ENCODE measurements at regions of chr7 and their contacts with region 1.

Region 1: DNA sequence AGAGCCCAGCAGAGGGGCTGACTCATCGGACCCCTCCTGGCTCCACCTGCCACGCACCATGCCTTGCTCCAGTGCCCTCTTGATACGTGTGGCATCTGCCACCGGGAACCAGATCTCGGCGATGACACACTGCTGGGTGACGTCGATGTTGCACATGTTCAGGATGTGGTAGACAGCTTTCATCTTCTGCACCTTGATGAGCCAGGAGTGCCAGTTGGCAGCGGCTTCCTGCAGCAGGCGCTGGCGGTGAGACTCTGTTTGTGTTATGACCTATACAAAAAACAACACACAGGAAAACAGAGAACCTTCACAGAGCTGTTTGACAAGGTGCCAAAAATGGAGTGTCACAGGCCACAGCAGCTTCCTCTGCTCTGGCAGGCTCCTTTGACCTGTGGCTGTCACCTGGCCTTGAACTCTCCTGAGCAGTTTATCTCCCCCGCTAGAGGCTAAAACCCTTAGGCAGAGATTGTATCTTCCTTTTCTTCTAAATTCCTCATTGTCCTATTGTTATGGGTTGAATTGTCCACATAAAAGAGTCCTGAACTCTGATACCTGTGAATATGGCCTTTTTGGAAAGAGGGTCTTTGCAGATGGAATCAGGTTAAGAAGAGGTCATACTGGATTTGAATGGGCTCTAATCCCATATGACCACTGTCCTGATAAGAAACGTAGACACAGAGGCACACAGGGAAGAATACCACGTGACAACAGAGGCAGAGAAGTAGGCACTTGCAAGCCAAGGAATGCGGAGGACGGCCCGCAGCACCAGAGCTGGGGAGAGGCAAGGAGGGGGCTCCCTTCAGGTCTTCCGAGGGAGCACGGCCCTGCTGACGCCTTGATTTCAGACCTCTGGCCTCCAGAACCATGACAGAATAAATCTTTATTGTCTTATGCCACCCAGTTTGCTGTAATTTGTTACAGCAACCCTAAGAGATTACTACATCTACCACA is 45.0 kb upstream of the TMEM213 start:
- DNase-seq: peak; percentile 76 to 99 (median 95)
- ATAC-seq: peak; percentile 92 to 96 (median 92)
- H3K4me3 ChIP-seq: peak overlapping the region in 1 of 2 donors; percentile 15
- H3K4me3 Mint-ChIP-seq: peak overlapping the region; percentile 22 to 67 (median 57)
- H3K27ac ChIP-seq: peak overlapping the region; percentile 90
- H3K27ac Mint-ChIP-seq: peak overlapping the region; percentile 85 to 93
- H3K4me1 ChIP-seq: peaks cover 15 to 36% of the 10 kb centered on the region in 2 experiments
- H3K4me1 Mint-ChIP-seq: peaks cover 52 to 80% (median 77%) of the 10 kb centered on the region in 3 donors
- H3K27me3 ChIP-seq: peaks cover 0 to 3% of the 10 kb centered on the region in 2 experiments
- H3K27me3 Mint-ChIP-seq: no peaks in the 10 kb centered on the region

Region 2: GRCh38 chr7:138618933-138619332 is 133.9 kb before region 1 on chr7:
- CTCF ChIA-PET with region 1: no interaction called
- POLR2A ChIA-PET with region 1: no interaction called
- DNase-seq: no peak
- ATAC-seq: no peak
- H3K4me3 ChIP-seq: no peak overlapping the region
- H3K4me3 Mint-ChIP-seq: no peak overlapping the region
- H3K27ac ChIP-seq: no peak overlapping the region
- H3K27ac Mint-ChIP-seq: no peak overlapping the region
- H3K4me1 ChIP-seq: peaks cover 0 to under 1% of the 10 kb centered on the region in 2 experiments
- H3K4me1 Mint-ChIP-seq: peaks cover 0 to 9% (median 2%) of the 10 kb centered on the region in 3 donors
- H3K27me3 ChIP-seq: no peaks in the 10 kb centered on the region
- H3K27me3 Mint-ChIP-seq: no peaks in the 10 kb centered on the region

Region 3: GRCh38 chr7:138684360-138684759 is 68.5 kb before region 1 on chr7:
- CTCF ChIA-PET with region 1: no interaction called
- POLR2A ChIA-PET with region 1: no interaction called
- DNase-seq: no peak
- ATAC-seq: no peak
- H3K4me3 ChIP-seq: no peak overlapping the region
- H3K4me3 Mint-ChIP-seq: no peak overlapping the region
- H3K27ac ChIP-seq: no peak overlapping the region
- H3K27ac Mint-ChIP-seq: no peak overlapping the region
- H3K4me1 ChIP-seq: no peaks in the 10 kb centered on the region
- H3K4me1 Mint-ChIP-seq: peaks cover 0 to 7% (median 0%) of the 10 kb centered on the region in 3 donors
- H3K27me3 ChIP-seq: peaks cover 0 to 13% of the 10 kb centered on the region in 2 experiments
- H3K27me3 Mint-ChIP-seq: peaks cover 5 to 6% of the 10 kb centered on the region in 2 donors

Region 4: DNA sequence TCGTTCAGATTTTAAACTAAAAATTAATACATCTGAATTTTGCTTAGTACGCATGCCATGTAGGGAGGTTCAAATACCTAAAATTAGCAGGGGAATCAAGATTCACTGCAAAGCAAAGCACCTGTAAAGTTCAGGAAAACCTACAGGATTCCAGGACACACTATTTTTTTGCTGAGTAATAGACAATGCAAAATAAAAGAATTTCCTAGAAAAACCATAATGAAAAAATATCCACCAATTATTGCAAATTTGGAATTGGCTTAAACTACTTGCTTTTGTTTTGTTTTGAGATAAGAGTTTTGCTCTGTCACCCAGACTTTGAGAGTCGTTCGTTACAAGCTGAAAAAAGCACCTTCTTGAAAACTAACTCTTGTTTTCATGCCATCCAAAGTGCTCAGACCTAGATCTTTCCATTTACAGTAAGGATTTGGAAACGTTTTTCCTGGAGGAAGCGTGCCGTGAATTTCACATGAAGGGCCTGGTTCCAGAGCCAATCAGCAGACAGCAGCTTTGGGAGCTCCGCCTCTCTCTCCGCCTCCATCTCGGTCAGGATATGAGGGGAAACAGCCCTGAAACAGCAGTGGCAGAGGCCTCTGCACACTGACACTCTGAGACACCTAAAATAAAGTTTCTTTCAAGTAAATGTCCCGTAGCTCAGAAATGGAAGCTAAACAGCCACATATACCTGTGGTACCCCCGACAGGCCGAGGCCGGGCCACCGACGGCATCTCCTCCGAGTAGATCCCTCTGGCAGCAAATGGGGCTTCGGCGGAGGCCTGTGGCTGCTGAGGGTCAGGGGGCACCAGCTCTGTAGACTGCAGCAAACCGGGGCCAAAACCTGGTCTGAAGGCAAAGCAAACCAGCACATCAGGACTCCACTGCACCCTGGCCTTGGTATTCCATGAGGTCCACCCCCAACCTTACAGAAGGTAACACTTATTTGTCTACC is 91.1 kb after region 1 on chr7:
- CTCF ChIA-PET with region 1: no interaction called
- POLR2A ChIA-PET with region 1: interaction called in 1 of 2 experiments, 18 read pairs
- DNase-seq: no peak
- ATAC-seq: no peak
- H3K4me3 ChIP-seq: no peak overlapping the region
- H3K4me3 Mint-ChIP-seq: no peak overlapping the region
- H3K27ac ChIP-seq: no peak overlapping the region
- H3K27ac Mint-ChIP-seq: no peak overlapping the region
- H3K4me1 ChIP-seq: no peaks in the 10 kb centered on the region
- H3K4me1 Mint-ChIP-seq: no peaks in the 10 kb centered on the region
- H3K27me3 ChIP-seq: peaks cover 0 to 16% of the 10 kb centered on the region in 2 experiments
- H3K27me3 Mint-ChIP-seq: peaks cover 9 to 18% of the 10 kb centered on the region in 2 donors

Measured in T-cell (primary cell).